ENCODE measurements at regions of chr16 and their contacts with region 1.

Region 1: GRCh38 chr16:3234543-3235541 is at the start of gene ZNF200:
- DNase-seq: peak; percentile 95
- H3K4me3 Mint-ChIP-seq: peak within 1 kb of the TSS; percentile 95
- H3K27ac Mint-ChIP-seq: peak within 1 kb of the TSS; percentile 96
- H3K4me1 Mint-ChIP-seq: peaks cover 4% of the 10 kb centered on the region
- H3K27me3 Mint-ChIP-seq: no peaks in the 10 kb centered on the region
- CTCF ChIP-seq: no peak
- total RNA-seq, gene ZNF200: 6.6 and 8.8 TPM in 2 replicates

Region 2: GRCh38 chr16:3188925-3189825 is 45.7 kb before region 1 on chr16:
- CTCF ChIA-PET with region 1: no interaction called
- POLR2A ChIA-PET with region 1: interaction called, 11 read pairs
- intact Hi-C with region 1: no loop called
- DNase-seq: peak; percentile 72
- H3K4me3 Mint-ChIP-seq: peak overlapping the region; percentile 78
- H3K27ac Mint-ChIP-seq: peak overlapping the region; percentile 50
- H3K4me1 Mint-ChIP-seq: peaks cover 5% of the 10 kb centered on the region
- H3K27me3 Mint-ChIP-seq: no peaks in the 10 kb centered on the region
- CTCF ChIP-seq: no peak

Region 3: DNA sequence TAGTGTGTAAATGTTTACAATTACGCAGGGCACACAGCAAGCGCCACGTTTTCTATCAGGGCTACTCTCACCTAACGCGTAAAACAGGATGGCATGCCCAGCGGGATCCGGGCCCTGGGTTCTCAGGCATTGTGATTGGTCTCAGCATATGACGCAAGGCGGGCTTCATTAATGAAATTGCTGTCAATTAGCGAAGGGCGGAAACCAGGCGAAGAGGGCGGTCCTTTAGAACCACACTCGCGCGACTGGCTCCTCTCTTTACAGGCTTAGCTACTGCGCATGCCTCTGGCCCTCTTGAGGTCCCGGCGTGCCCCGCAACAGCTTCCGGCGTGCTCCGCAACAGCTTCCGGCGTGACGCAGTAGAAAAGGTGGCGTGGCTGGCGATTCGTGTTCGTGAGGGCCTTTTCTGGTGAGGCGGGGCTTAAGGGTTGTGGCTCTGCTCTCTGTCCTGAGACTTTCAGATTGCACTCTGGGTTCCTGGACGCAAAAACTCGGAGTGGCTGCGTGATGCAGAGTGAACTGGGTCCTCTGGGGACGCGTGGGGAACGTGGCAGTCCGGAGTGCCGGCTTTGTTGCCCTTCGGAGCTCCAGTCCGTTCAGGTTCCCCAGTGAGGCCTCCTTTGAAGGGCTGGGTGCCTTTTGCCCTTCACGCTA is 130.1 kb after region 1 on chr16:
- CTCF ChIA-PET with region 1: no interaction called
- POLR2A ChIA-PET with region 1: no interaction called
- intact Hi-C with region 1: no loop called
- DNase-seq: no peak
- H3K4me3 Mint-ChIP-seq: no peak overlapping the region
- H3K27ac Mint-ChIP-seq: no peak overlapping the region
- H3K4me1 Mint-ChIP-seq: no peaks in the 10 kb centered on the region
- H3K27me3 Mint-ChIP-seq: peaks cover 12% of the 10 kb centered on the region
- CTCF ChIP-seq: no peak